Calu3 (cell line): ENCODE measurements at regions of chr1 and their contacts with region 1.

Region 1: GRCh38 chr1:46223472-46223943 is 20.4 kb downstream of the LURAP1 start:
- DNase-seq: peak; percentile 72
- H3K4me3 Mint-ChIP-seq: no peak overlapping the region
- H3K27ac Mint-ChIP-seq: no peak overlapping the region
- H3K4me1 Mint-ChIP-seq: peaks cover 20% of the 10 kb centered on the region
- H3K27me3 Mint-ChIP-seq: no peaks in the 10 kb centered on the region
- CTCF ChIP-seq: peak; percentile 94

Region 2: GRCh38 chr1:46036894-46037839 is 186.3 kb before region 1 on chr1:
- CTCF ChIA-PET with region 1: interaction called, 9 read pairs
- intact Hi-C with region 1: loop called (anchors 1 kb)
- DNase-seq: peak; percentile 90
- H3K4me3 Mint-ChIP-seq: no peak overlapping the region
- H3K27ac Mint-ChIP-seq: no peak overlapping the region
- H3K4me1 Mint-ChIP-seq: no peaks in the 10 kb centered on the region
- H3K27me3 Mint-ChIP-seq: no peaks in the 10 kb centered on the region
- CTCF ChIP-seq: peak; percentile 95

Region 3: DNA sequence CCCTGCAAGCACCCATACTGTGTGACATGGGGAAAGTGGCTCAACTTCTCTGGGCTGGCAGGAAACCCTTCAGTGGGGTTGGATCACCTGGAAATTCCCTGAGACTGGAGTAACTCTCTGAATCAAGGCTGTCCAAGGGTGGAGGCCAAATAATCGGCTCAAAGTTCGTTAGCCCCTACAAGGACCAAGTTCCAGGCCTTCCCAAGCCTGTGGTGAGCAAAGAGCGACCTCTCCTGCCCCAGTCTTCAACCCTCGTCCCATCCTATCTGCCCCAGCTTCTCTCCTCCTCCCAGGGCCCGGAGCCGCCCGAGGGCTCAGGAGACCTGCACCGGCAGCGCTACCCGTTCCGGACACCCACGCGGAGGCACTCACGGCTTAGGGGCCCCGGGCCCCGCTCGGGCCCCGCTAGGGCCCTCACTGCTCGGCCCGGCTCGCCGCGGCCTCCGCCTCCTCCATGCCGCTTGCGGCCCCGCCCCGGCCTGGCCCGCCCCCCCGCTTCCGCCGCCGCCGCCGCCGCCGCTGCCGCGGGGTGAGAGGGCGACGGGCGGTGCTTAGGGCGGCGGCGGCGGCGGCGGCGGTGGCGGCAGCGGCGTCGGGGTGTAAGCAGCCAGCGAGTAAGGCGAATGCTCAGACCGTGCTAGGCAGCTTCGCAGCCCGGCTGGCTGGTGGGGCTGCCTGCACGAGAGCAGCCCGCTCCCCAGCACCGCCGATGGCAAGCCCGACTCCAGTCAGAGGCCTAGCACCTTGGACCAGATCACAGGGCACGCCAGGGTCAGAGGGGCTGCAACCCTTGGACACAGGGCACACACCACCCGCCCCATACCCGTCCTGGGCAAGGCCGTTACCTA is 25.3 kb before region 1 on chr1 and contains the start of gene POMGNT1:
- CTCF ChIA-PET with region 1: interaction called, 15 read pairs
- intact Hi-C with region 1: no loop called
- DNase-seq: peak; percentile 81
- H3K4me3 Mint-ChIP-seq: peak within 1 kb of the TSS; percentile 79
- H3K27ac Mint-ChIP-seq: no peak within 1 kb of the TSS
- H3K4me1 Mint-ChIP-seq: peaks cover 15% of the 10 kb centered on the region
- H3K27me3 Mint-ChIP-seq: peaks cover 8% of the 10 kb centered on the region
- CTCF ChIP-seq: no peak
- total RNA-seq, gene POMGNT1: 62.0 and 74.5 TPM in 2 replicates

Region 4: DNA sequence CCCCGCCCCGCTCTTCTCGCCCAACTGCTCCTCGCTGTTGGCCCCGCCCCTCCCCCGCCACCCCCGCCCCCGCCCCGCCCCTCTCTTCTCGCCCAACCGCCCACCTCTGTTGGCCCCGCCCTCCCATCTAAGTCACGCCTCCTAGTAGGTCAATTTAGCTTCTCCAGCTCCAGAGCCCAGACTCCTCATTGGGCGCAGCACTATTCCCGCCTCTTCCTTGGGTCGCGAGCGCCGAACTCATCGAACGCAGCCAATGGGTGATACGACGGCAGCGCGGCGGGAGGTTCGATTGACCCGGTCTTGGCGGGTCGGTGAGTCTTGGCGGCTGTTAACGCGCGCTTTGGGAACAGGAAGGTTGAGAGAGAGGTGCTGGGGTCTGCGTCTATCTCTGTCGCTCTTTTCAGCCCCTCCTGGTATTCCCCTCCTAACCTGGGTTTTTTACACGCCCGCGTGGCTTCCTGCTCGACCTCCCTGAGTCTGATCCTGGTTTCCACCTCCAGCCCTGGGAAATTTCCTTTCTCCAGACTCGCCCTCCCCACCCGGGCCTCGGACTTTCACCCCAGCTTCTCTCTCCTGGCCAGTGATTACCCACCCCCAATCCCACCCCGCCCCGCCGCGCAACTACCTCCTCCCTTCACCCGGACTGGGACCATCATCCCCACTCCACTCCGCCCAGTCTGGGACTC is 24.1 kb after region 1 on chr1 and contains the start of gene RAD54L:
- CTCF ChIA-PET with region 1: interaction called, 13 read pairs
- intact Hi-C with region 1: no loop called
- DNase-seq: peak; percentile 97
- H3K4me3 Mint-ChIP-seq: peak within 1 kb of the TSS; percentile 94
- H3K27ac Mint-ChIP-seq: peak within 1 kb of the TSS; percentile 81
- H3K4me1 Mint-ChIP-seq: peaks cover 15% of the 10 kb centered on the region
- H3K27me3 Mint-ChIP-seq: no peaks in the 10 kb centered on the region
- CTCF ChIP-seq: no peak
- total RNA-seq, gene RAD54L: 22.5 and 25.2 TPM in 2 replicates

Region 5: DNA sequence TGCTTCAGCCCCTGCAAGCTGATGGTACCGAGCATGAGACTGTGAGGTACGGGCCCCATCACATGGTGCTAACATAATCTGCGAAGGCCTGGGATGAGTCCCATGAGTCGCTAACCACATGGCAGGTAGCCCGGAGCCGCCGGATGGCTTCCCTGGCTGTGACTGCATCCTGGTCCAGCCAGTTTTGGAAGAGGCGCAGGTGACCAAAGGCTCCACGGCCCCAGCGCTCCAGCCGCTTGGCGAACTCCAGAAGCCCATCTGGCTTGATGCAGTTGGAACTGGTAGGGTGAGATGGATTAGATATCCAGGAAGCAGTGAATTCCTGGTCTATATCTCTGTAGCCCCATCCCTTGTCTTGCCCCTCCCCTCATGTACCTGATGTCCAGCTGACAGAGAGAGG is 55.3 kb after region 1 on chr1:
- CTCF ChIA-PET with region 1: no interaction called
- intact Hi-C with region 1: no loop called
- DNase-seq: no peak
- H3K4me3 Mint-ChIP-seq: no peak overlapping the region
- H3K27ac Mint-ChIP-seq: no peak overlapping the region
- H3K4me1 Mint-ChIP-seq: no peaks in the 10 kb centered on the region
- H3K27me3 Mint-ChIP-seq: no peaks in the 10 kb centered on the region
- CTCF ChIP-seq: no peak